SK-N-SH (cell line): ENCODE measurements at regions of chr3 and their contacts with region 1.

Region 1: DNA sequence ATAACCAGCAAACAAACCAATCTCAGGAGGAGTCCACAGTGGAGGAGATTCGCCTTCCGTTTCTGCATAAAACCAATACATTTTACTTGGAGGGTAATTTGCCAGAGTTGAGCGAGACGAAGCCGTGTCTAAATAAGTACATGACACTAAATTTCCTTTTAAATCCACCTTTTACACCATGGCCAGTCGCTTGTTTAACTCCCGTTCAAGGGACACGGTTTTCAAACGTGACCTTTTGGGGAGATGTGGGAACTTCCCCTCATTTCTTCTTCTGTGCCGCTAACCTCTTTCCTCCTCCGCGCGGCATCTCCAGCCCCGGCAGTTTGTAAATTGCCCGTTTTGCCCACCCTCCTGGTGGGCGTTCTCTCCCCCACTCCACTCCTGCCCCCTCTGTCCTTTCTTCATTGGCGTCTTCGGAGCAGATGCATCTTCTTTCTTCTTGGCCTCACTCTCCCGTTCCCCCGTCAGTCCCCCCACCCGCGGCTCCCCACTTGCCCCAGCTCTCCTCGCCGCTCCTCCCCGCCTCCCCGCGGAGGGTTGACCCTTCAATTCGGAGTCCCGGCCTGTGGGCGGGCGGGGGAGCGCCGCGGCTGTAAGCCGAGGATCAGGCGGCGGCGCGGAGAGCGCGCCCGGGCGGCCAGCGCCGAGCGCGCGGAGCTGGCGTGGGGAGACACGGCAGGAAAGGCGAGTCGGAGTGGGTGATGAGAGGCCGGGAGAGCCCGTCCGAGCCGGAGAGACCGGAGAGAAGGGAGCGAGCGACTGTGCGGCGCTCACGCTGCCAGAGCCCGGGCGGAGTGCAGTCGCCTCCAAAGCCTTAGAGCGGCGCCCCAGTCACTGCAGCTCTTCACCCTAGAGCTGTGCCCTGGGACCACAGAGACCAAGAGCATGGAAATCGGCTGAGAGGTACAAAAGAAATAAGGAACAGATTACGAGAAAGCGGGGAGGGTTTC is at the start of gene NLGN1:
- DNase-seq: peak; percentile 78
- H3K4me3 ChIP-seq: peak within 1 kb of the TSS; percentile 63 to 75
- H3K27ac ChIP-seq: peak within 1 kb of the TSS; percentile 19 to 68; a peak in 2 of 4 replicates
- H3K4me1 ChIP-seq: peaks cover 0 to 20% of the 10 kb centered on the region in 2 experiments; a peak in 2 of 4 replicates
- H3K27me3 ChIP-seq: 0 out of 2 replicates have a peak, but pooled peaks cover 5% of the 10 kb centered on the region
- CTCF ChIP-seq: peak; percentile 44
- EP300 ChIP-seq: no peak
- RAD21 ChIP-seq: peak; percentile 4; the same call in 1 of the 2 replicates
- polyA plus RNA-seq, gene NLGN1: 1.5 and 2.4 TPM in 2 replicates

Region 2: DNA sequence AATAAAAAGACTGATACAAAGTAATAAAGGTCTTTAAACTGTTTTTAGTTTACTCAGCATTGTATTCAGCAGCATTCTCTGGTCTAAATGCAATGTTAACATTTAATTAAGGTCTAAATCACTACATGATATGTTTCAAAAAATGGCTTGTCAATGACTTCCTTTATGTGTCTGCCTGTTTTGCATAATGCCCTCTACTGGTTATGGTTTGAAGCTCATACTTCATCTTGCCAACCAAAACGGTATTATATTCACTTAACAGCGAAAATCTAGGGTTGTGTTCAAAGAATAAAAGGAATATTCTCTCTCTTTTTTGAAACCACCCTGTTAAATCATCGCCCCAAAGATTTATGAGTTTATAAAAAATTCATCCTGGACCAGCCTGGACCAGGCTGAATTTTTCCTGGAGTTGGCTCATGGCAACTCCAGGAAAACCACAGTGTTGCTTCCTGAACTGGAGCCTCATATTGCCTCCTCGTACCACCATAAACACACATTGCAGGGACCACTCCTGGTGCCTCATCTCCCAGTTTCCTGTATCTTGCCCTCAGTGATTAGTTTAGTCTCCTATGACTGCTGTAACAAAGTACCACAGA is 679.8 kb before region 1 on chr3:
- CTCF ChIA-PET with region 1: no interaction called
- POLR2A ChIA-PET with region 1: no interaction called
- DNase-seq: no peak
- H3K4me3 ChIP-seq: no peak overlapping the region
- H3K27ac ChIP-seq: no peak overlapping the region
- H3K4me1 ChIP-seq: no peaks in the 10 kb centered on the region
- H3K27me3 ChIP-seq: no peaks in the 10 kb centered on the region
- CTCF ChIP-seq: peak; percentile 56
- EP300 ChIP-seq: no peak
- RAD21 ChIP-seq: no peak

Region 3: DNA sequence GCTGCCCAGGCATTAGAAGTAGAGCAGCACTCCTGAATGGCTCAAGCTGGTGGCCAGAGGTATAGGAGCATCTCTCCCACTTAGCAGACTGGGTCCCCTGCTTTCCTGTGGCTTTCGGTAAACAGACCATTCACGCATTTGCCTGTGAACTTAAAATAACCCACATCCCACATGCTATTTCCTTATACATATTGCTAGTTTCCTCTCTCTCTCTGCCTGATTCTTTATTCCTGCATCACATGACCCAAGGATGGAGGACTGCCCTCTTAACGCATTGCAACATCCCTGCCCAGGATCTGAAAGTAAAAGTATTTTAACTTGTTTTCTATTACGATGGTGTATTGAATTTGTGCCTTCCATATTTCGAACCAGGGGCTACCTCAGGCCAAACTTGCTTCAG is 43.3 kb before region 1 on chr3:
- CTCF ChIA-PET with region 1: no interaction called
- POLR2A ChIA-PET with region 1: no interaction called
- DNase-seq: no peak
- H3K4me3 ChIP-seq: no peak overlapping the region
- H3K27ac ChIP-seq: no peak overlapping the region
- H3K4me1 ChIP-seq: no peaks in the 10 kb centered on the region
- H3K27me3 ChIP-seq: no peaks in the 10 kb centered on the region
- CTCF ChIP-seq: no peak
- EP300 ChIP-seq: no peak
- RAD21 ChIP-seq: no peak

Region 4: GRCh38 chr3:173411375-173411973 is 14.0 kb after region 1 on chr3:
- CTCF ChIA-PET with region 1: interaction called, 24 read pairs
- POLR2A ChIA-PET with region 1: no interaction called
- DNase-seq: peak; percentile 37
- H3K4me3 ChIP-seq: no peak overlapping the region; a peak in 1 of 4 replicates
- H3K27ac ChIP-seq: no peak overlapping the region
- H3K4me1 ChIP-seq: no peaks in the 10 kb centered on the region; a peak in 2 of 4 replicates
- H3K27me3 ChIP-seq: no peaks in the 10 kb centered on the region
- CTCF ChIP-seq: peak; percentile 72
- EP300 ChIP-seq: no peak
- RAD21 ChIP-seq: peak; percentile 76

Region 5: DNA sequence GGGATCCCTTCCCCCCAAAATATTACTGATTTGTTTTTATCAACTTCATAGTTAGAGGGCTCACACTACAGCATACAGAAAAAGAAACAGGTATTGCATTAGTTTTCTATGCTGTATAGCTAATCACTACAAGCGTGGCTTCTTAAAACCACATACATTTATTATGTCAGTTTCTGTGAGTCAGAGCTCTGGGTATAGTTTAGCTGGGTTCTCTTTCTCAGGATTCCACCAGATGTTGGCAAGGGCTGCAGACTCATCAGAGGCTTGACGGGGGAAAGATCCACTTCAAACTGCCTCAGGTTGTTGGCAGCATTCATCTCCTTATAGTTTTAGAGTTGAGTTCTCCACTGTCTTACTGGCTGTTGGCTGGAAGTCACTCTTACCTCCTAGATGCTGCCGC is 328.1 kb after region 1 on chr3:
- CTCF ChIA-PET with region 1: no interaction called
- POLR2A ChIA-PET with region 1: no interaction called
- DNase-seq: no peak
- H3K4me3 ChIP-seq: no peak overlapping the region
- H3K27ac ChIP-seq: no peak overlapping the region
- H3K4me1 ChIP-seq: no peaks in the 10 kb centered on the region
- H3K27me3 ChIP-seq: no peaks in the 10 kb centered on the region
- CTCF ChIP-seq: no peak
- EP300 ChIP-seq: no peak
- RAD21 ChIP-seq: no peak